ENCODE measurements at regions of chr17 and their contacts with region 1.

Region 1: DNA sequence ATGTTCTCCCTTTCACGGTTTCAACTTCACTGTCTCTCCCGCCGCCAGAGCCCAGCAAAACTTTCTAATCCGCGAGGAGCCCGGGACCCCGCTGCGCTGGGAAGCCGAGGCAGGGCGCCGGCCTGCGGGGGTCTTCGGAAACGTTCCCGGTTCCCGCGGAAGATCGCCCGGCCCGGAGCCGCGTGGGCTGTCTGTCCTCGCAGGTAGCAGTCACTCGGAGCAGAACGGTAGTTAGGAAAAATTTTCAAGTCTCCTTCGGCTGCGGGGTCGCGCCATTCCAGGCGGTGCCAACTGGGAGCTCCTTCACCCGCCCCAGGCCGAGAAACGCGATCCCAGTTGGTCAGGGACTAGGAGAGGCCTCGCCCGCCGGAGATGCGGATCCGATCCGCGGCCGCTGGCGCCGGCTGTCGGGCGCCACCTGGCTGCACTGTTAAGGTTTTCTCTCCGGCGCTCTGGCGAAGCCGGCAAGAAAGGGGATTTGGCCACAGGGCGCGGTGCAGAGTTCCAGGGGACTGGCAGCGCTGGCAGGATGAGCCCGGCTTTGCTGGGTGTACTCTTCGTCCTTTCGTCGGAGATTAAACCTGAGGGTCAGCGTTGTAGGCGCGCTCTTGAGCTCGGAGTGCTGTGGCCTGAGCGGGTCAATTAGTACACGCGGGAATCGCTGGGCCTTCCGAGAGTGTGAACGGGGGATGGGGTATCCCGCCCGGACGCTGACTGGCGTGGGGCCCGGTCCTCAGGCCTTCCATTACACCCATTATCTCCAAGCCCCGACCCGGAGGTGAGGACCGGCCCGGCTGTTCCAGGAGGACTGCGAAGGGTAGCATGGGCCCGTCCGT is 135.4 kb downstream of the KCNJ12 start:
- DNase-seq: peak; percentile 71 to 96 (median 84)

Region 2: DNA sequence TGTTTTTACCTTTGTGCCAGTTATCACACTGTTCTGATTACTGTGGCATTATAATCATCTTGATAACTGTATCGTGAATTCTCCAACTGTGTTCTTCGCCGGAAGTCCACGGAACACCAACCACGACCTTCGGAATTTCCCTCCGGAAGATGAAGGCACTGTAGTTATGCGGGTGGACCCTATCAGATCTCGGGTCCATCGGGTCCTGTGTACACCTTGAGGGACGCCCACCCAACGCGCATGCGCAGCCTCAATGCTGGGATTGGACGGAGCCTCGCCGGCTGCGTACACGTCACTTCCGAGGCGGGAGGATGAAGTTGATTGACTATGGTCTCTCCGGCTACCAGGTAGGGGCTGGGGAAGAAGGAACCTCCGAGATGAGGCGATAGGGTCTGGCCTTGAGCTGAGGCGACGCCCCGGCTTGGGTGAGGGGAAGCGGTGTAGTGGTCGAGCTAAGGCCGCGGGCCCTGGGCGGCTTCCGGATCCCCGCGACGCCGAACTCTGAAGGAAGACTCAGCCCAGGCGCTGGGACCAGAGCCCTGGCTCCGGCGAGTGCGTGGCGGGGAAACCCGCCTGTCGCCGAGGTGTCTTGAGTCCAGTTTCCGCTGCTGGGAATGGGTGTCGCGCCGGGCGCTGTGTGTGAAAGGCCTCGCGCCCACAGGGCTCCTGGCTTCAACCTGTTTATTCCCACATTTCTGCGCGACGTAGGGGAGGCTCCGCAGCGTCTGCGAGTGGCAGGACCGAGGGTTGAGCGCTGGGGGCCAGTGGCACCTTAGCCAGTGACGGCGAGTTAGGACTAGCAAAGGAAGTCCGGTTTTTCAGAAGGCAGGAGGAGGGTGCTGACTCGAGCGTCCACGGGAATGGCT is 384.7 kb before region 1 on chr17 and contains the start of gene DHRS7B:
- intact Hi-C with region 1: loop called (anchors 2 kb)
- DNase-seq: peak; percentile 93 to 99 (median 96)

Region 3: GRCh38 chr17:21275579-21276263 is 235.9 kb before region 1 on chr17:
- intact Hi-C with region 1: loop called (anchors 2 kb)
- DNase-seq: peak; percentile 93 to 100 (median 96)

Region 4: DNA sequence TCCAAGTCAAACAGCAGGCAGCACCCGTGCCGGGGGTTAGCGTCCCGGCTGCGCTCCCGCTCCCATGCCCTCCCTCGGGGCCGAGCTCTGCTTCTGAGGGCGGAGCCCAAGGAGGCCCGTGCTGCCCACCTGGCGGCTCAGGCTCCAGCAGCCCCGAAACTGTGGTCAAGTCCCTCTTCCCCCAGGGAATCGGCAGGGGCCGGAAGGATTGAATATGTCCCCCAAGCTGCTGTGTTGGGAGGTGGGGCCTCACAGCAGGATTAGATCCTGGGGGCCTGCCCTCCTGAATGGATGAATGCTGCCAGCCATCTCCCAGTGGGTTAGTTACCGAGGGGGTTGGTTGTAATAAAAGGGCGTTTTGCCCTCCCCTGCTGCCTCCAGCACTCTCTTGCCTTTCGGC is 193.1 kb before region 1 on chr17:
- intact Hi-C with region 1: loop called (anchors 5 kb)
- DNase-seq: peak in 5 of 10 donors; percentile 3 to 78 (median 74)

Region 5: GRCh38 chr17:21445091-21445650 is 66.4 kb before region 1 on chr17:
- intact Hi-C with region 1: no loop called
- DNase-seq: no peak